ENCODE measurements at regions of chr20 and their contacts with region 1.

Region 1: GRCh38 chr20:645318-646106 is 7.5 kb downstream of the SRXN1 start:
- DNase-seq: peak; percentile 74
- H3K4me3 Mint-ChIP-seq: no peak overlapping the region
- H3K27ac Mint-ChIP-seq: no peak overlapping the region
- H3K4me1 Mint-ChIP-seq: peaks cover 18% of the 10 kb centered on the region
- H3K27me3 Mint-ChIP-seq: peaks cover 13% of the 10 kb centered on the region

Region 2: DNA sequence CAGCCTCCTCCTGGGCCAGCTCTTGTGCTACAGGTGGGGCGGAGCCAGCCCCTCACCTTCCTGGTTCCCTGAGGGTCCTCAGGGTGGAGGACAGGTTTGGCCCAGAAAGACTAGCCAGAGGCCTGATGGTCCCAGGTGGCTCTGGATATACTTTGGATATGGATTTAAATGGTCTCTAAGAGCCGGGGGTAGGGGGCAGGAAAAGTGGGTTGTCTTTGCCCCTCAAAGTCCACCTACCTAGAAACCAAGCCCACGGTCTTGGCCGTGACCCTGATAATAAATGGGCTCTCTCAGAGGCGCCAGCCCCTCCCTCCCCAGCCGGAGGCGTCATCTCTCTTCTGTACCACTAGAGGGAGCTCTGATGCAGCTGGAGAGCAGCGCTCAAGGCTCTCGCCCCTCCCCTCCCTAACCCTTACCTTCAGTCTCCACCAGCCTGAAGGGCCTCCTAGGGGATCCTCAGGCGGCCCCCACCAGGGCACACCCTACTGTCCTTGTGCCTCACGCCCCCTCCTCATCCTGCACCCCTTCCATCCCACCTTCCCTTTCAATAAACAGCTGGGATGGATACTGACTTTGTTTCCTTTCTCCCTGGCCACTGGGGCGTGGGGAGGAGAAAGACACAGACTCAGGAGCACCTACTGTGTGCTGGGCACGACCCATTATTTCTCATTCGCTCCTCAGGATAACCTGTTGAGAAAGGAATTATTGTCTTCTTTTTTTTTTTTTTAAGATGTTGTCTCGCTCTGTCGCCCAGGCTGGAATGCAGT is 291.0 kb before region 1 on chr20:
- CTCF ChIA-PET with region 1: interaction called, 13 read pairs
- POLR2A ChIA-PET with region 1: interaction called, 3 read pairs
- DNase-seq: peak; percentile 83
- H3K4me3 Mint-ChIP-seq: no peak overlapping the region
- H3K27ac Mint-ChIP-seq: no peak overlapping the region
- H3K4me1 Mint-ChIP-seq: peaks cover 15% of the 10 kb centered on the region
- H3K27me3 Mint-ChIP-seq: peaks cover 4% of the 10 kb centered on the region

Region 3: DNA sequence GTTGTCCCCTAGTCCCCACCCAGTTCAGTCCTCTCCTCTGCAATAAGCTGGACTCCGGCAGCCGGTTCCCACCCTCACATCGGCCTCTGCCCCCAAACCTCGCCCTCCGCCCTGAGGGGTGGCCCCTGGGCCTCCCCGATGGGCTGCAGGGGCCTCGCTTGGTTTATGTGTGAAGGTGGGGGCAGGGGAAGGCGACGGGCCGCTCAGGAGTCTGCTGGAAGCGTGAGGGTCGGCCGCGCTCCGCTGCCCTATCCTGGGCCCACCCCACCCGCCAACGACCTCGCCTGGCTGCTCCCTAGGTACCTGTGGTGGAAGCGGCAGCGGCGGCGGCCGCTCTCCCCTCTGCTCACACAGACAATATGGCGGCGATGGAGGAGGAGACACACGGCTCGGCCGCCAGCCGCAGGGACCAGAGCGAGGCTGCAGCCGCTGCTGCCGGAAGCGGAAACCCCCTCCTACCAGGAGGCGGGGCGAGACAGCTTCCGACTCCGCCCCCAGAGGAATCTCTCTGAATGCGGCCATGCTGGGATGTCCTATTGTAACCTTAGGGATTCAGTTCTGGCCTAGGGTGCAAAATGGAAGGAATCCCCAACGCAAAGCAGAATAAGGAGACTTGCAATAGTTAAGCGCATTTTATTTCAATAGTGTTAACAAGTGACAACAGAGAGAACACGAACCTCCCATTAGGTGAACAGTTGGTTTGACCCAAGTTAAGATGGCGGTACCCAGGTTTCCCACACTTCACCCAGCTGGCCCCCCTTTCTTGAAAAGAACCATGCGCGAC is 102.0 kb before region 1 on chr20 and contains the start of gene CSNK2A1:
- CTCF ChIA-PET with region 1: interaction called, 11 read pairs
- POLR2A ChIA-PET with region 1: interaction called, 6 read pairs
- DNase-seq: peak; percentile 96
- H3K4me3 Mint-ChIP-seq: peak within 1 kb of the TSS; percentile 84
- H3K27ac Mint-ChIP-seq: peak within 1 kb of the TSS; percentile 91
- H3K4me1 Mint-ChIP-seq: peaks cover 45% of the 10 kb centered on the region
- H3K27me3 Mint-ChIP-seq: peaks cover 5% of the 10 kb centered on the region
- total RNA-seq, gene CSNK2A1: 101 to 111 TPM

Region 4: GRCh38 chr20:561437-562231 is 83.9 kb before region 1 on chr20:
- CTCF ChIA-PET with region 1: interaction called, 30 read pairs
- POLR2A ChIA-PET with region 1: no interaction called
- DNase-seq: peak; percentile 59
- H3K4me3 Mint-ChIP-seq: no peak overlapping the region
- H3K27ac Mint-ChIP-seq: no peak overlapping the region
- H3K4me1 Mint-ChIP-seq: no peaks in the 10 kb centered on the region
- H3K27me3 Mint-ChIP-seq: peaks cover 12% of the 10 kb centered on the region

Region 5: GRCh38 chr20:631101-631500 is 14.4 kb before region 1 on chr20:
- CTCF ChIA-PET with region 1: interaction called, 31 read pairs
- POLR2A ChIA-PET with region 1: no interaction called
- DNase-seq: no peak
- H3K4me3 Mint-ChIP-seq: no peak overlapping the region
- H3K27ac Mint-ChIP-seq: no peak overlapping the region
- H3K4me1 Mint-ChIP-seq: no peaks in the 10 kb centered on the region
- H3K27me3 Mint-ChIP-seq: peaks cover 9% of the 10 kb centered on the region

Region 6: GRCh38 chr20:655726-656624 is 10.5 kb after region 1 on chr20:
- CTCF ChIA-PET with region 1: interaction called, 13 read pairs
- POLR2A ChIA-PET with region 1: no interaction called
- DNase-seq: no peak
- H3K4me3 Mint-ChIP-seq: no peak overlapping the region
- H3K27ac Mint-ChIP-seq: no peak overlapping the region
- H3K4me1 Mint-ChIP-seq: peaks cover 18% of the 10 kb centered on the region
- H3K27me3 Mint-ChIP-seq: peaks cover 34% of the 10 kb centered on the region

Region 7: GRCh38 chr20:663315-664090 is 18.0 kb after region 1 on chr20:
- CTCF ChIA-PET with region 1: interaction called, 13 read pairs
- POLR2A ChIA-PET with region 1: no interaction called
- DNase-seq: no peak
- H3K4me3 Mint-ChIP-seq: no peak overlapping the region
- H3K27ac Mint-ChIP-seq: no peak overlapping the region
- H3K4me1 Mint-ChIP-seq: peaks cover 5% of the 10 kb centered on the region
- H3K27me3 Mint-ChIP-seq: peaks cover 56% of the 10 kb centered on the region

Region 8: DNA sequence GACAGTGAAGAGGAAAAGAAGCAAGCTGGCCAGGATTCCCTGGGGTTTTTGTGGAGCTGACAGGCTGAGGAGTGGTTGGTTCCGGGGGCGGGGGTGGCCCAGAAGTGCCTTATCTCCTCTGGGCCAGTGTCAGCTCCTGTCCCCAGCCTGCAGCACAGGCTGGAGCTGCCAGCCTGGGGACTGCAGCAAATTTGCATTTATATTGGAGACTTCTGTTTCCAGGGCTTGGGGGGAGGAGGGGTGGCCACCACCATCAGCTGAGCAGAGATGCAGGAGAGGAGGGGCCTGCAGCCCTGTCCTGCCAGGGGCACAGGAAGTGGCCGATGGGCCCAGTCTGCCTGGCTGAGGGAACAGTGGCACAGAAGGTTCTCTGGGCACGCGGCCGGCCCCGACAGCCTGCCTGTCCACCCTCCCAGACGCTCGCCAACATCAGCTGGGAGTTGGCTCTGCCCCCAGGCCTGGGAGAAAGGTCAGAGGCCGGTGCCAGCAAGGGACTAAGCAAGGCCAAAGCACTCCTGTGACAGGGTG is 54.4 kb after region 1 on chr20:
- CTCF ChIA-PET with region 1: no interaction called
- POLR2A ChIA-PET with region 1: no interaction called
- DNase-seq: no peak
- H3K4me3 Mint-ChIP-seq: no peak overlapping the region
- H3K27ac Mint-ChIP-seq: no peak overlapping the region
- H3K4me1 Mint-ChIP-seq: no peaks in the 10 kb centered on the region
- H3K27me3 Mint-ChIP-seq: no peaks in the 10 kb centered on the region

Measured in activated CD4-positive, alpha-beta memory T cell treated with anti-CD3 and anti-CD28 coated beads, Interleukin-2, amount 10 ng/mL, durations not matched to agents 7 days and 5 days (primary cell).